PC-3 (cell line): ENCODE measurements at regions of chr14 and their contacts with region 1.

Region 1: DNA sequence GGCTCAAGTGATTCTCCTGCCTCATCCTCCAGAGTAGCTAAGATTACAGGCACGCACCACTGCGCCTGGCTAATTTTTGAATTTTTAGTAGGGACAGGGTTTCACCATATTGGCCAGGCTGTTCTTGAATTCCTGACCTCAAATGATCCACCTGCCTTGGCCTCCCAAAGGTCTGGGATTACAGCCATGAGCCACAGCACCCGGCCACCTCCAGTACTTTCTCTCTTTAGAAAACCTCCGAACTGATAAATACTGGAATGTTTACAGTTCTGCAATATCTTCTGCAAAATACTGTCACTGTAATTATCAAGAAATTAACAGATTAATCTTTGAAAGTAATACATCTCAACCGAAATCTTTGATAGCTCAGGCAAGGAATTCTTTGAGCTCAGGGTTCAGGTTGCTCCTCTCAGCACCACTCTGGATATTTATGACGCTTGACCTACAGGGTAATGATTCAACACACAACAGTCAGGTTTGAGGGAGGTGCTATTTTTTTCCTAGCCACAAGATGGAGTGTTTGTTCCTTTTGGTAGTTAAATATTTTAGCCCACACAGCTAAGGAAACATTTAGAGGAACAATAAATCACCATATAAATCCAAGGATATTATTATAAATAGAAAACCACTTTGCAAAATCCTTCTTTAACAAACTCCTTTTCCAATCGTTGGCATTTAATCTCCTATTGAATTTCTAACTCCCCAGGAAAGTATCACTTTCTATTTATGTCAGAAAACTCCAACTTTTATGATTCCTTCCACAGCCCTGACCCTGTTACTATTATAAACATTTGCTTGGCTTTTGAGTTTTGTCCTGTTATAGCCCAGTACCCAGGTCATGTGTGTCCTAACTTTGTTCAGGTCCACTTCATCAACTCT is 48.6 kb upstream of the GTF2A1 start:
- DNase-seq: peak; percentile 90
- ATAC-seq: peak; percentile 78
- H3K4me3 ChIP-seq: no peak overlapping the region
- H3K27ac ChIP-seq: no peak overlapping the region
- H3K4me1 ChIP-seq: peaks cover 32% of the 10 kb centered on the region
- H3K27me3 ChIP-seq: no peaks in the 10 kb centered on the region
- CTCF ChIP-seq: peak; percentile 90

Region 2: DNA sequence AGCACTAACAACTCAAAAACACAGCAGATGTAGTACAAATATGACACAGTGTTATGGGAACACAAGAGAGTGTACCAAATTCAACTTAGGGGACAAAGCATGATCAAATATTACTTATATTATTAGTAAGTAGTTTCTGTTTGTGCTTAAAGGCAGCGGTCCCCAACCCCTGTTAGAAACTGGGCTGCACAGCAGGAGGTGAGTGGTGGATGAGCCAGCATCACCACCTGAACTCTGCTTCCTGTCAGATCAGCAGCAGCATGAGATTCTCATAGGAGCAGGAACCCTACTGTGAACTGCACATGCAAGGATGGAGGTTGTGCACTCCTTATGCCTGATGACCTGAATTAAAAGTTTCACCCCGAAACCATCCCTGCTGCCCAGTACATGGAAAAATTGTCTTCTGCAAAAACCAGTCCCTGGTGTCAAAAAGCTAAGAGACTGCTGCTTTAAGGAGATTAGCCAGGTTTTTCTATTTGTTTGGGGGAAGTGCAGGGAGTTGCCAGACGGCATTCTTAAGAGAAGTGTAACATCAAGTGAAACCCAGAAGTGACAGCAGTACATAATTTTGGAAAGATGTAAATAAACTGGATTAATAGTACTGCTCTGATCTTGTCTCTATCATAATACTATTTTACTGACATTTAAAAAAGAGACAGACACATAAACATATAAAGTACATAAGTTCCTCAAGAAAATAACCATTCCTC is 75.3 kb before region 1 on chr14:
- CTCF ChIA-PET with region 1: no interaction called
- POLR2A ChIA-PET with region 1: no interaction called
- intact Hi-C with region 1: no loop called
- DNase-seq: peak; percentile 57
- ATAC-seq: peak; percentile 97
- H3K4me3 ChIP-seq: no peak overlapping the region
- H3K27ac ChIP-seq: peak overlapping the region; percentile 32
- H3K4me1 ChIP-seq: peaks cover 14% of the 10 kb centered on the region
- H3K27me3 ChIP-seq: no peaks in the 10 kb centered on the region
- CTCF ChIP-seq: no peak

Region 3: DNA sequence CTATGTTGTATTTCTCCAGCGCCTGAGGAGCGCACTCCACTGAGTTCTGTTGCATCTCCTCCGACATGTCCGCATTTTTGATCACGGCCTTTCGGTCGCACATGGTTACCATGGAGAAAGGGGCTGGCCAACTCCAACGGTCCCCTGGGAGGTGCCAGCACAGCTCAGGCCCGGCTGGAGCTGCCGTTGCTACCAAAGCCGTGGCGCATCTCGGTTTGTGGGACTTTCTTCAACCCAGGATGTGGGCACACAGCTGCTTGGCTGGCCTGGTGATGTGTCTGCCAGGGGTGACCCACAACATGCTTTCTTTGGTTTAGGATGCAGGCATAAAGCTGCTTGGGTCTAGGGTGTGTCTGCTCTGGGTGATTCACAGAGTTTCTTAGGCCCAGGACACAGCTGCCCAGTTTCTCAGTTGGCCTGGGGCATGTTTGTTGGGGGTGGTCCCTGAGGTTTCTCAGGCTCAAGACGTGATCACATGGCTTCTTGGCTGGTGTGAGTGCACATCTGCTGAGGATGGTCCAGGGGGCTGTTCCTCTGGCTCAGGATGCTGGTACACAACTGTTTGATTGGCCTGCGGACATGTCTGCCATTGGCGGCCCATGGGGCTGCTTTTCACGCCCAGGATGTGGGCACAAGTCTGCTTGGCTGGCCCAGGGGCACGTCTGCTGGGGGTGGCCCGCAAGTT is 22.7 kb before region 1 on chr14:
- CTCF ChIA-PET with region 1: no interaction called
- POLR2A ChIA-PET with region 1: no interaction called
- intact Hi-C with region 1: no loop called
- DNase-seq: peak; percentile 37
- ATAC-seq: no peak; the same call in 1 of the 2 replicates
- H3K4me3 ChIP-seq: no peak overlapping the region
- H3K27ac ChIP-seq: peak overlapping the region; percentile 54
- H3K4me1 ChIP-seq: peaks cover 11% of the 10 kb centered on the region
- H3K27me3 ChIP-seq: no peaks in the 10 kb centered on the region
- CTCF ChIP-seq: no peak

Region 4: DNA sequence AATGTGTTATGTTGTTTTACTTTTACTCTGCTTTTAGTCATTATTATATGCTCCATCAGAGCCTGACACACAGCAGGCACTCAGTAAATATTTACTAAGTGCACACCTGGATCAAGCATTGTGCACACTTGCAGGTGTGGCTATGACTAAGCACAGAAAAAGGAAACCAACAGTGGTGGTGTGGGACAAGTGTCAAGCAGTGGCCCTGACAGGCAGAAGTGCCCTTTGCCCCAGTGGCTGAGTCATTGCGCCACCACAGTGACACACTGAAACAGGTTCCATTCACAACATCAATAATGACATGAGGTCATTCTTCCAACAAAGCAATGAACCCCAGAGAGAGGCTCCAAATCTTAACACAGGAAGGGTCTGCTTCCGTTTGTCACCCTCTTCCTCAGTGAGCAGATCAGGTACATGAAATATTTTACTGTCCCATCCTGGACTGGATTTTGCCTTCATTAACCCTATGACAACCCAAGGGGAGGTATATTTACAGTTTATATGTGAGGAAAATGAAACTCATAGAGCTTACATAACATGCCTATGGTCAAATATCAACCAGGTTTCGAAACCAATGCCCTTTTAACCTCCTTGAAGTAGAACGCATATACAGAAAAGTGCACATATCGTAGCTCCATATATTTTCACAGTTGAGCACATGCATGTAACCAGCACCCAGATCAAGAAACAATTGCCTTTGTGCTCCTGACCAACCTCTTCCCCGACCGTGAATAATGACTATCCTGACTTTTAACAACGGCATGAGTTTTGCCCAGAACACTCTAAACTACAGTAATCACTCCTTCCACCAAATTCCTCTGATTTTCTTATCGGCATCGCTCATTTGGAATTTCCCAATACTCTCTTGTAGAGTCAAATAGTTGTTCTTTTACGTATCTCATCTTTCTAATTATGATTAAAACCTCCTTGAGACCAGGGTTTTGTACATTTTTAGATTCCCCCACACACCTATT is 34.2 kb after region 1 on chr14:
- CTCF ChIA-PET with region 1: no interaction called
- POLR2A ChIA-PET with region 1: no interaction called
- intact Hi-C with region 1: loop called (anchors 2 kb)
- DNase-seq: peak; percentile 97
- ATAC-seq: peak; percentile 98
- H3K4me3 ChIP-seq: no peak overlapping the region
- H3K27ac ChIP-seq: peak overlapping the region; percentile 69
- H3K4me1 ChIP-seq: peaks cover 22% of the 10 kb centered on the region
- H3K27me3 ChIP-seq: no peaks in the 10 kb centered on the region
- CTCF ChIP-seq: no peak

Region 5: GRCh38 chr14:81453166-81453766 is 183.9 kb after region 1 on chr14:
- CTCF ChIA-PET with region 1: interaction called, 35 read pairs
- POLR2A ChIA-PET with region 1: interaction called, 7 read pairs
- intact Hi-C with region 1: loop called (anchors 1 kb)
- DNase-seq: peak; percentile 78
- ATAC-seq: peak; percentile 77
- H3K4me3 ChIP-seq: no peak overlapping the region
- H3K27ac ChIP-seq: no peak overlapping the region
- H3K4me1 ChIP-seq: no peaks in the 10 kb centered on the region
- H3K27me3 ChIP-seq: no peaks in the 10 kb centered on the region
- CTCF ChIP-seq: peak; percentile 92

Region 6: DNA sequence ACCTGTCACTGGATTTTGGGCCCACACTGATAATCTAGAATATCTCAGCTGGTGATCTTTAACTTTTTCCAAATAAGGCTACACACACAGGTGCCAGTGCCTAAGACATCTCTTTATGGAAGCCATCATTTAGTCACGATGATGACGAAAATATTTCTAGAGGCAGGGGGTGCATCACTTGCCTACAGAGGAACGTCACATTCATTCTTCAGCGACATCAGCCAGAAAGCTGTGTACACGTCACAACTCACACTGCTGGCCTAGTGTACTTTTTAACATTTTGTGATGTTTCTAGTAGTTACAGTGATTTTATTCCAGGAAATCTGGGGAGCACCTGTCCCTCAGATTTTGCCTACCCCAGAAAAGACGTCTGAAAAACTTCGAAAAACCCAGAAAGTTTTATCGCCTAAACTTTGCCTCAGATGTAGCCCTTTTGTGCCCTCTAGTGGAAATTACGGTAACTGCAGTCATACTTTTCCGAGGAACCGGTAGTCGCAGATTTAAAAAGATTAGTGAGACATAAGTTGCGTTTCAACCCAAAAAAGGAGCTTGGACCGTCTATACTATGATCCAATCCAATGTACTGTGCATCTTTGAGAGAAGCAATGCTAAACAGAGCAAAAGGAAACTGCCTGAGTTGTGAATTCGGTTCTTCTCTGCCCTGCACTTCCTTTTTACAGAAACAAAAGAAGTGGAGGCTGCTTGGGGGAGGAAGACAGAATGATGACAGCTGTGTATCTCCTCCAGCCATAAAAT is 195.1 kb after region 1 on chr14:
- CTCF ChIA-PET with region 1: interaction called, 11 read pairs
- POLR2A ChIA-PET with region 1: no interaction called
- intact Hi-C with region 1: loop called (anchors 1 kb)
- DNase-seq: peak; percentile 88
- ATAC-seq: peak; percentile 44; the same call in 1 of the 2 replicates
- H3K4me3 ChIP-seq: peak overlapping the region; percentile 61
- H3K27ac ChIP-seq: no peak overlapping the region
- H3K4me1 ChIP-seq: no peaks in the 10 kb centered on the region
- H3K27me3 ChIP-seq: no peaks in the 10 kb centered on the region
- CTCF ChIP-seq: peak; percentile 96